Activated naive CD4-positive, alpha-beta T cell treated with anti-CD3 and anti-CD28 coated beads for 36 hours (primary cell): ENCODE measurements at regions of chr1 and their contacts with region 1.

Region 1: GRCh38 chr1:27430903-27431600 is 38.6 kb downstream of the GPR3 start:
- DNase-seq: peak; percentile 41
- H3K4me3 Mint-ChIP-seq: peak overlapping the region; percentile 12
- H3K27ac Mint-ChIP-seq: peak overlapping the region; percentile 76
- H3K4me1 Mint-ChIP-seq: peaks cover 84% of the 10 kb centered on the region
- H3K27me3 Mint-ChIP-seq: no peaks in the 10 kb centered on the region

Region 2: DNA sequence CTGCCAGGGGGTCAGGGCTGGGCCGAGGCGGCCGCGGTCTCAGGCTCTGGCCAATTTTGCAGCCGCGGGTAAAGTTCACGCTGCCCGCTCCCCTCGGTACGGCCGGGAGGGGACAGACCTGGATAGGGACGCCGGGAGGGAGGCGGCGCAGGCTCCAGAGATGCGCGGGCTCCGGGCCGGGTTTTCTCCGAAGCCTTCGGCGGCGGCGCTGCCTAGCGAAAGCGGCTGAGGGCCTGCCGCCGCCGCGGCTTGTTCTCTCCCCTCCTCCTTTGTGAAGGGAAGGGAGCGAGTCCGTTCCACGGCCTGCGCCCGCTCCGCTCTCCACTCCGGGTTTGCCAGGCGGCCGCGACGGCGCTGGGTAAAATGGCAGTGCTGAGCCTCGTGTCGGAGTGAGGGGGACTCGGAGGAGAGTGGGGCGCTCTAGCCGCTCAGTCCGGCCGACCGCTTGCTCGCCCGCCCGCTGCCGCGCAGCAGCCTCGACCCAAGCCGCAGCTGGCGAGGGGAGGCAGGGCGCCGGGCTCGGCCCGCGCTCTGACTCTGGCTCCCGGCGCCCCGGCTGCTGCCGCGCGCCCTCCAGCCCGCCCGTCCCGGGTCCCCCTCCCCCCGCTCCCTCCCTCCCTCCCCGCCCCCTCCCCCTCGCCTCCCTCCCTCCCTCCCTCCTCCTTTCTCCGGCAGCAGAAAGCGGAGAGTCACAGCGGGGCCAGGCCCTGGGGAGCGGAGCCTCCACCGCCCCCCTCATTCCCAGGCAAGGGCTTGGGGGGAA is 735.5 kb before region 1 on chr1 and contains the start of gene ARID1A:
- CTCF ChIA-PET with region 1: no interaction called
- intact Hi-C with region 1: no loop called
- DNase-seq: peak; percentile 95
- H3K4me3 Mint-ChIP-seq: peak within 1 kb of the TSS; percentile 81
- H3K27ac Mint-ChIP-seq: peak within 1 kb of the TSS; percentile 91
- H3K4me1 Mint-ChIP-seq: peaks cover 22% of the 10 kb centered on the region
- H3K27me3 Mint-ChIP-seq: no peaks in the 10 kb centered on the region
- total RNA-seq, gene ARID1A: 65.0 to 65.9 TPM

Region 3: GRCh38 chr1:26986658-26987057 is 444.4 kb before region 1 on chr1:
- CTCF ChIA-PET with region 1: no interaction called
- intact Hi-C with region 1: no loop called
- DNase-seq: no peak
- H3K4me3 Mint-ChIP-seq: no peak overlapping the region
- H3K27ac Mint-ChIP-seq: no peak overlapping the region
- H3K4me1 Mint-ChIP-seq: peaks cover 5% of the 10 kb centered on the region
- H3K27me3 Mint-ChIP-seq: peaks cover 21% of the 10 kb centered on the region

Region 4: DNA sequence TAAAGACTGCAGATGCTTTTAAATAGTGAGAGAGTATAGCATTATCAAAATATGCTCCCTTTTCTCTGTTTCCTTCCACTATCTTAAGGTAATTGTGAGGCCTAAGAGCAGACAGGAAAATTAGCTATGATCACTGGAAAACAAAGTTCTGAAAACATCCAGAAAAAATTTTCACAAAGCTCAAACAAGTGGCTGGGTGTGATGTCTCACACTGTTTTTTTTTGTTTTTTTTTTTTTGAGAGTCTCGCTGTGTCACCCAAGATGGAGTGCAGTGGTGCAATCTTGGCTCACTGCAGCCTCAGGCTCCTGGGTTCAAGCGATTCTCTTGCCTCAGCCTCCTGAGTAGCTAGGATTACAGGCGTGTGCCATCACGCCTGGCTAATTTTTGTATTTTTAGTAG is 189.4 kb before region 1 on chr1:
- CTCF ChIA-PET with region 1: no interaction called
- intact Hi-C with region 1: no loop called
- DNase-seq: no peak
- H3K4me3 Mint-ChIP-seq: no peak overlapping the region
- H3K27ac Mint-ChIP-seq: no peak overlapping the region
- H3K4me1 Mint-ChIP-seq: peaks cover 15% of the 10 kb centered on the region
- H3K27me3 Mint-ChIP-seq: no peaks in the 10 kb centered on the region

Region 5: GRCh38 chr1:27481994-27482620 is 51.1 kb after region 1 on chr1:
- CTCF ChIA-PET with region 1: interaction called, 3 read pairs
- intact Hi-C with region 1: loop called (anchors 5 kb)
- DNase-seq: no peak
- H3K4me3 Mint-ChIP-seq: no peak overlapping the region
- H3K27ac Mint-ChIP-seq: peak overlapping the region; percentile 81
- H3K4me1 Mint-ChIP-seq: peaks cover 64% of the 10 kb centered on the region
- H3K27me3 Mint-ChIP-seq: no peaks in the 10 kb centered on the region